ENCODE measurements at regions of chr17 and their contacts with region 1.

Region 1: DNA sequence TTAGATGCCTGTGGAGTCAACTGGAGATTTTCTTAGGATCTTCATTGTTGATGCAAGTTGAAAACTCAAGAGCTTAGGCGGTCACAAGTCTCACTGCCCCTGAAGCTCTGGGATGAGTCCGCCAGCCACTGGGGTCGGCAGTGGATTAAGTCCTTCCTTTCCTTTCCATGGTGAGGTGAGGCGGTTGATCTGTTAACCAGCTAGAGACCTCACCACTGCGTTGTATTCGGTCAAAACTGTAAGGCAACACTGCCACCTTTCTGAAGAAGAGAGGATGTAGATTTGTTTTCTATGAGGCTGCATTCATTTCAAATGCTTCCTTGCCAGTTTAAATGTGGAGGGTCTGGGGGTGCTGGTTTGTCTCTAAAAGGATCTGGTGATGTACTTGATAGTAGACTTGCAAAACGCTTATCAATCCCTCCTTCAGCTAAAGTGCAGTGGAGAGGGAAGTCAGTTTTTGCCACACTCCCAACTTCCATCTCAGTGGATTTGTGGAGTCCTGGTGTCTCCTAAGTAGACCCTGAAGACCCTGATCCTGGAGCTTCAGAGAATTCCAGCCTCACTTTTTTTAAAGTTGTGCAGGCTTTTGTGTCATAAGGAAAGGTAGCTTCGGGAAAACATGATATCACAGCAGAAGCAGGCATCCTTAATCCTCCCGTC is 1.7 kb downstream of the MYOCD start:
- DNase-seq: no peak

Region 2: GRCh38 chr17:12180644-12181261 is 486.7 kb before region 1 on chr17:
- intact Hi-C with region 1: loop called (anchors 2 kb)
- DNase-seq: no peak

Region 3: GRCh38 chr17:12256380-12256995 is 410.9 kb before region 1 on chr17:
- intact Hi-C with region 1: loop called (anchors 2 kb)
- DNase-seq: no peak

Region 4: GRCh38 chr17:12730931-12731521 is 63.6 kb after region 1 on chr17:
- intact Hi-C with region 1: loop called (anchors 2 kb)
- DNase-seq: peak; percentile 93

Region 5: DNA sequence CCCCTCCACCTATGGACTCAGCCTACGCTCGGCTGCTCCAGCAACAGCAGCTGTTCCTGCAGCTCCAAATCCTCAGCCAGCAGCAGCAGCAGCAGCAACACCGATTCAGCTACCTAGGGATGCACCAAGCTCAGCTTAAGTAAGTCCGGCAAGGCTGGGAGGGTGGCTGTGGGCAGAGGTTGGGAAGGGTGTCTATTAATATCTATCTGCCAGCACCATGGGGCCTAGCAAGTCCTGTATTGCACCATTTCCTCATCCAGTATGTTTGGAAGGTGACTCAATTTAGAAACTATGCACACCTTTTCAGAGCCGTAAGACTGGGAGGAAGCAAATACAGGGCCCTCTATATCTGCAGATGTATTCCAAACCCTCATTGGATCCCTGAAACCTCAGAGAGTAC is 76.9 kb after region 1 on chr17:
- intact Hi-C with region 1: loop called (anchors 2 kb)
- DNase-seq: peak; percentile 84

Region 6: DNA sequence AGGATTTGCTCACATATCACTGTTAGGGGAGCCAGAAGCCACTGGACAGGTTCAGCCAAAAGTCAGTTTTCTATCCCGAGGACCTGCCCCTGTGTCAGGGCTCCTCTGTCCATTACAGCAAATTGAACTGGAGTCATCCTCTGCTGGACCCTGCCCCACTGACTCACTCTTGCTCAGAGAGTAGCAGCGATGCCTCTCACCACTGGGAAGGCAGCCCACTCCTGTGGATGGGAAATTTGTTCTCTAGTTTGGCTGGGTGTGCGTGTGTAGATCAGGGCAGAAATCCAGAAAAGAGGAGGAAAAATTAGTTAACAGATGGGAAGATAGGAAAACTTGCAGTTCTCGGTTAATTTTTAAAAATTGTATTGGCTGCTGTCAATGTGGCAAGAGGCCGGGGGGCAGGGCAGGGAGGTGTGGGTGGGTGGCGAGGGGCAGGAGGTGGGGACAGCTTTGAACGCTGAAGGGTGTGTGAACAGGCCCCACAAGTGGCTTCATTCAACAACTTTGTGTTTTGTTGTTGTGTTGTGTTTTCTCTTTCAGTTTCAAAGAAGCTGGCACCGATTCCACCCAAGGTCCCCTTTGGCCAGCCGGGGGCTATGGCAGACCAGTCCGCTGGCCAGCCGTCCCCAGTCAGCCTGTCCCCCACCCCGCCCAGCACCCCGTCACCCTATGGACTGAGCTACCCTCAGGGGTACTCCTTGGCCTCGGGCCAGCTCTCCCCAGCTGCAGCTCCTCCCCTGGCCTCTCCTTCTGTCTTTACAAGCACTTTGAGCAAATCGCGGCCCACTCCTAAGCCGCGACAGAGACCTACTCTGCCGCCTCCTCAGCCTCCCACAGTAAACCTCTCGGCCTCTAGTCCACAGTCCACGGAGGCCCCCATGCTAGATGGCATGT is 316.8 kb after region 1 on chr17:
- intact Hi-C with region 1: loop called (anchors 10 kb)
- DNase-seq: no peak

Measured in cardiac septum (tissue), 1 donor.